Sciatic nerve (tissue), 2 donors: ENCODE measurements at regions of chr9 and their contacts with region 1.

Region 1: DNA sequence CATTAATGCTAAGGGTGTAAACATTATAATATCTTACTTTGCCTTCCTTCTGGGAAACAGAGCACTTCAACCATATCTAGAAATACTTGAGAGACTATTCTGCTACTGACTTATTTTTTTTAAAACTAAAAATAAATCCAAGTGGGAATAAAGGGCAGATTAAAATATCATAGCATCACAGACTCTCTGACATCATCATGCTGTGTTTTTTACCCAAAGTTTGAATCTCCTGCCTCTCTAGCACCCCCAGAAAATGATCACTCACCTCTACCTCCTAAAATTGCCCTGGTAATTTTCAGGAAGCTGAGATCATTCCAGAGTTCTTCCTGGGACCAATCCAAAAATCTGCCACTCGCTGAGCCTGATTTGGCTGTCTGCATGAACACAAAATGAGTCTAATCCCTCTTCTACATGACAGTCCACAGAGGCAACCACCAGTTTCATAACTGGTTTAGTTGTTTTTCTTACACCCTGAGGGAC is 813.8 kb upstream of the DMAC1 start:
- DNase-seq: no peak
- ATAC-seq: no peak

Region 2: GRCh38 chr9:7930613-7931012 is 682.8 kb before region 1 on chr9:
- intact Hi-C with region 1: no loop called
- DNase-seq: no peak
- ATAC-seq: no peak

Region 3: DNA sequence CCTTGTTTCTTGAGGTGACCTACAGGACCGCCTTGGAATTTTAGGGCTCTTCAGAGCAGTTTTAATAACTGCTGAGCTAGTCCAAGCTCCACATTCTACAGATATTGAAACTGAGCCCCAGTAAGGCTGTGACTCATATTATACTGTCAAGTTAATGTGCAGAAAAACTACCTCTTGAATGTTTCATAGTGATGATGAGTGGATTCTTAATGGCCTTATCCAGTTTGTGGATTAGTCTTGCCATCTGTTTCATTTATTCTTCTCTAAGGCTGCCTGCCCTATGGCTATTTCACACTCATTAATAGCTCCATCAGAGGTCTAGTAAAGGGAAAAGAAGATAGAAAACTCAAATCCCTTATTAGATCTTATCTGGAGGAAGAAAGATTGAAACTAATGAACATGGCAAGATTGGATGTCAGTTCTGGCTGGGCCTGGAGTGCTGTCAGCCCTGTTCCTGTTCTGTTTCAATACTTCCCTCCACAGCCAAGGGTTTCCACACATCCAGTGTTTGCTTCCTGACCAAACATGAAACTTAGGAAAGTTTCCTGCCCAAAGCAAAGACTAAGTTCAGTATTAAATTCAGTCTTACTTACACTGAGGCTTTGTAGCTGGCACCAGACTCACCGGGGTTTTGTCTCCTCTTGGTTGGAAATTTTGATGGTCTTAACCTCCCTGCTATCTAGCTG is 598.2 kb before region 1 on chr9:
- intact Hi-C with region 1: no loop called
- DNase-seq: no peak
- ATAC-seq: no peak

Region 4: DNA sequence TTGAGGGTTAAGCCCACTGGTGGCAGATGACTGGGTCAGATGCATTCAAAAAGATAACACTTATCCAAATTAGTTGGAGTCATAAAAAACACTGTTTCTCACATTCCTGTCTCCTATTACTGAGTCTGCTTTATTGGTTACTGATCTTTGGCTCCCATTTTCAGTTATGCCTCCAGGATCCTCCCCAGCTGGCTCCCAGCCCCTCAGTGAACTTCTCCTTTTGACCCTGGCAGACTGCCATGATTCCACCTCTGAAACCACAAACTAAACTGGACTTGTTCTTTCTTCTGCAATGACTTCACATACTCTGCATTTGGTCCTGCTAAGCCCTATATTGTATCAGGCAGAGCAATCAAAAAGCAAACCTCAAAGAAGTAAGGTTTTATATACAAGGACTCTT is 47.0 kb after region 1 on chr9:
- intact Hi-C with region 1: loop called (anchors 10 kb)
- DNase-seq: peak; percentile 85
- ATAC-seq: peak; percentile 93